ENCODE measurements at regions of chr11 and their contacts with region 1.

Region 1: DNA sequence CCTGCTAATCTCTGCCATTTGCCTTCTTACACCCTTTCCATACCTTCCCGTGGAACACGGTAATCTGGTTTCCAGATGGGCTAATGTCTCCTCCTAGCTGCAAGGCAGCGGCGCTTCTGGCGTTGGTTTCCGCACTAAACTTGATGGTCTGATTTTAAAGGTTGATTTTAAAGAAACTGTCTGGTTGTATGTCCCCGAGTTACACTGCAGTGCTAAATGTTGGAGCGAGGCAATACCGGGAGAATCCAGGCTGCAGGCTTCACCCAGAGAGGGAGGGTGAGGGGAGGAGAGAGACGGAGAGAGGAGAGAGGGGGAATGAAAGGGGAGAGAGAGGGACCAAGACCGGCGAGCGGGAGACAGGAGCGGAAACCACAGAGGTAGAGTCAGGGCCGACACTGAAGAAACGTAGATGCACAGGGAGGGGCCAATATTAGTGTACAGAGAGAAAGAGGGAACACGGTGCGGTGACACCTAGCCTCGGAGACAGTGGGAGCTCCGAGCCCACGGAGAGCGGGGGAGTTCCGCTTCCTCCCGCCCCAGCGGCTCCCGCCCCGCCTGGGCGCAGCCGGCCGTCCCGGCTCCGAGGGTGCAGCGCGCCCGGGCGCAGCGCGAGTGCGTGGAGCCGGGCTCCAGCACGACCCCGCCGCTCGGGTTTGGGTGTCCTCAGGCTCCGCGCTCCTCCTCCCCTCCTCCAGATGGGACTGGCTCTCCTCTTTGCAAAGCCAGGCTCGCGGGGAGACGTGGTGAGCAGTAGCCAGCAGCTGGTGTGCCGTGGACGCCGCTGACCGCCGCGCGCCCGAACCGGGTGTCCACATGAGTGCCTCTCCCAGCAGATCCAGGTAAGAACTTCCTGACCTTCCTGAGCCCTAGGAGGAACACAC is 71.9 kb upstream of the GRAMD1B start:
- DNase-seq: peak; percentile 21 to 65 (median 44)
- ATAC-seq: peak; percentile 39 to 70 (median 63)
- H3K4me3 ChIP-seq: peak overlapping the region; percentile 34 to 69 (median 58)
- H3K27ac ChIP-seq: peak overlapping the region in 11 of 12 donors; percentile 52 to 83 (median 77)
- H3K4me1 ChIP-seq: peaks cover 0 to 26% (median 8%) of the 10 kb centered on the region in 12 donors
- H3K27me3 ChIP-seq: peaks cover 0 to 38% (median 5%) of the 10 kb centered on the region in 9 donors
- CTCF ChIP-seq: peak in 10 of 12 donors; percentile 8 to 57 (median 34)
- POLR2A ChIP-seq: no peak

Region 2: DNA sequence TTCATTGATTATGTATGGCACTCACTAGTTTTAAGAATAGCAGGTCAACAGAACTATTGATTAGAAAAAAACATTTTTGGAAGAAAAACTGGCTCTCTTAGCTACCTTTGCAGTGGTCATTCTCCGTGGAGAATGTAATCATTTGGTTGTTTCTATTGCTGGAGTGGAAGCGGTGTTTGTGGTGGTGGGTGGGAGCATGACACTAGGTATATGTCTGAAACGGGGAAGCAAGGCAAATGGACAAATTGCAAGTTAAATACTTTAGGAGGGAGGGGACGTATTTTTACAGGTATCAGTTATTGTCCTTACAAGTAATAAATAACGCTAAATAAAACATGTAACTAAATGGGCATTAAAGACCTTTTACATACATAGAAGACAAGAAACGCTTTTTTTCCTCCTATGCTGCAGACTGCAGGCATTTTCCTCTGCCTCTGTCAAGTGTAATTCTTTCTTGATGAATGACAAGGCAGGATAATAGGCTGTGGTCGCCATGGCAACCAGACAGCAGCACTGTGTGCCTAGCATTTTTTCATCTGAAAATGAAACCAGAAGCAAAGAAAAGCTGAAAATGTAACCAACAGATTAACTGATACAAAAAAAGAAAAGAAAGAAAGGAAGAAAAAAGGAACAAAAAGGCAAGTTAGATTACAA is 1288.4 kb before region 1 on chr11:
- intact Hi-C with region 1: no loop called
- DNase-seq: peak in 3 of 5 donors; percentile 37 to 52 (median 38)
- ATAC-seq: no peak
- H3K4me3 ChIP-seq: no peak overlapping the region
- H3K27ac ChIP-seq: no peak overlapping the region
- H3K4me1 ChIP-seq: peaks cover 0 to 44% (median 13%) of the 10 kb centered on the region in 12 donors
- H3K27me3 ChIP-seq: no peaks in the 10 kb centered on the region
- CTCF ChIP-seq: no peak
- POLR2A ChIP-seq: no peak

Region 3: DNA sequence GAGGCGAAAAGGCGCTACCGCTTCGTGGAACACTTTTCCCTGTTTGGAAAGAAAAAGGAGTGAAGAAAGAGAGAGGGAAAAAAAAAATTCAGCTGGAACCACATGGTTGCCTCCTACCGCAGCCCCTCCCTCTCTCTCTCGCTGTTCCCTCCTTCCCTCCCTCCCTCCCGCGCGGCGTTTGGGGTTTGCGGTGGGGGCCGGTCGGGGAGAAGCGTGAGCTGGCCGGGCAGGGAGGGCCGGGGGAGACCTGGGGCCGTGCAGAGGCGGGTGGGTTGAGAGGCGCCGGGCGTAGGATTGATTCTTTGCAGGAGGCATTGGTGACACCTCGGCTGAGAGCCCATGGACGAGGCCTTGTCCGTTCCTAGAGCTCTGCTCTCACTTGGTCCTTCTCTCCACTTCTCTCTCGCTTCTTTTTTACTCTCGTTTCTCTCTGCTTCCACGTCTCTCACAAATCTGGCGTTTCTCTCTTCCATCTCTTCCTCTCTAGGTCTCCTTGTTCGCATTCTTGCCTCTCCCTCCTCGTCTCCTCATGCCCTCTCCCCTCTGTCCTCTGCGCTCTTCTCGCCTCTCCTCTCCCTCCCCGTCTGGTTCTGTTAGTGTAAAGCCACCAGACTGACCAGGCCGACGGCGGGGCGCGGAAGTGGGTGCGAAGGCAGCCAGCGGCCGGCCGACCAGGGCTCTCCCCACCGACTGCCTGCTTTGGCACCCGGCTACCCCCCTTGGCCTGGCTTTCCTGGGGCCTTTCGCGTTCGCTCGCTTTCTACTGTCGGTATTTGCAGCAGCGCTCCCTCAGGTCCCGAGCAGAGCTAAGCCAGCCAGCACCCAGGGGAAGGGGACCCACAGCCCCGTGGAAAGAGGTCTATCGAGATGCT is 162.8 kb before region 1 on chr11 and contains the start of gene CLMP:
- intact Hi-C with region 1: no loop called
- DNase-seq: peak; percentile 39 to 64 (median 49)
- ATAC-seq: peak in 3 of 4 donors; percentile 77 to 82 (median 78)
- H3K4me3 ChIP-seq: peak within 1 kb of the TSS; percentile 11 to 62 (median 47)
- H3K27ac ChIP-seq: peak within 1 kb of the TSS; percentile 8 to 91 (median 51)
- H3K4me1 ChIP-seq: peaks cover 0 to 18% (median 9%) of the 10 kb centered on the region in 12 donors
- H3K27me3 ChIP-seq: peaks cover 6 to 96% (median 36%) of the 10 kb centered on the region in 9 donors
- CTCF ChIP-seq: no peak
- POLR2A ChIP-seq: no peak
- total RNA-seq, gene CLMP: 2.5 to 18.4 (median 5.8) TPM

Region 4: GRCh38 chr11:123264431-123264780 is 93.8 kb before region 1 on chr11:
- intact Hi-C with region 1: no loop called
- DNase-seq: no peak
- ATAC-seq: no peak
- H3K4me3 ChIP-seq: no peak overlapping the region
- H3K27ac ChIP-seq: no peak overlapping the region
- H3K4me1 ChIP-seq: peaks cover 0 to 12% (median 0%) of the 10 kb centered on the region in 12 donors
- H3K27me3 ChIP-seq: peaks cover 0 to 22% (median 0%) of the 10 kb centered on the region in 9 donors
- CTCF ChIP-seq: no peak
- POLR2A ChIP-seq: no peak

Region 5: GRCh38 chr11:123301696-123302400 is 56.4 kb before region 1 on chr11:
- intact Hi-C with region 1: loop called (anchors 1 to 5 kb)
- DNase-seq: peak; percentile 56 to 86 (median 68)
- ATAC-seq: peak; percentile 29 to 92 (median 81)
- H3K4me3 ChIP-seq: peak overlapping the region; percentile 24 to 60 (median 45)
- H3K27ac ChIP-seq: peak overlapping the region in 5 of 12 donors; percentile 15 to 50 (median 33)
- H3K4me1 ChIP-seq: peaks cover 0 to 24% (median 13%) of the 10 kb centered on the region in 12 donors
- H3K27me3 ChIP-seq: peaks cover 0 to 18% (median 0%) of the 10 kb centered on the region in 9 donors
- CTCF ChIP-seq: peak; percentile 75 to 96 (median 91)
- POLR2A ChIP-seq: no peak

Region 6: GRCh38 chr11:123308077-123308476 is 50.1 kb before region 1 on chr11:
- intact Hi-C with region 1: loop called in 8 of 10 experiments (anchors 2 to 5 kb)
- DNase-seq: peak in 3 of 5 donors; percentile 21 to 60 (median 40)
- ATAC-seq: peak; percentile 88 to 92 (median 92)
- H3K4me3 ChIP-seq: no peak overlapping the region
- H3K27ac ChIP-seq: peak overlapping the region; percentile 44 to 88 (median 76)
- H3K4me1 ChIP-seq: peaks cover 0 to 22% (median 10%) of the 10 kb centered on the region in 12 donors
- H3K27me3 ChIP-seq: peaks cover 0 to 3% (median 0%) of the 10 kb centered on the region in 9 donors
- CTCF ChIP-seq: no peak
- POLR2A ChIP-seq: no peak

Region 7: DNA sequence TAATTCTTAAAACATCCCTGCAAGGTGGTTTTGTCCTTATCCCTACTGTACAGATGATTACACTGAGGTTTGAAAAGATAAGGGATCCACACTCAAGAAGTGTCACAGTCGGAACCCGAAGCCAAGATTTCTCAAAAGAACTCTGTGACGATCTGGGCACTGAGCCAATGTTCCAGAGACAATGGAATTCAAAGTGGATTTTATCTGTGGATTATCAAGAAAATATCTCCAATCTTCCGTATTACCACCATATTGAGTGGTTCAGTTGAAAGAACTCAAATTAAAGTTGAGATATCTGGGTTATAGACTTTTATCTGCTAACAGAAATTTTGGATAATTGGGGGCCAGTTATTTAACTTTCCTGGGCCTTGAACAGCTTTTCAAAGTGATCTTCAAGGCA is 28.1 kb before region 1 on chr11:
- intact Hi-C with region 1: loop called in 1 of 10 experiments (anchors 2 kb)
- DNase-seq: no peak
- ATAC-seq: no peak
- H3K4me3 ChIP-seq: no peak overlapping the region
- H3K27ac ChIP-seq: peak overlapping the region in 7 of 12 donors; percentile 6 to 51 (median 35)
- H3K4me1 ChIP-seq: peaks cover 0 to 19% (median 3%) of the 10 kb centered on the region in 12 donors
- H3K27me3 ChIP-seq: no peaks in the 10 kb centered on the region
- CTCF ChIP-seq: no peak
- POLR2A ChIP-seq: no peak